ENCODE measurements at regions of chr12 and their contacts with region 1.

Region 1: DNA sequence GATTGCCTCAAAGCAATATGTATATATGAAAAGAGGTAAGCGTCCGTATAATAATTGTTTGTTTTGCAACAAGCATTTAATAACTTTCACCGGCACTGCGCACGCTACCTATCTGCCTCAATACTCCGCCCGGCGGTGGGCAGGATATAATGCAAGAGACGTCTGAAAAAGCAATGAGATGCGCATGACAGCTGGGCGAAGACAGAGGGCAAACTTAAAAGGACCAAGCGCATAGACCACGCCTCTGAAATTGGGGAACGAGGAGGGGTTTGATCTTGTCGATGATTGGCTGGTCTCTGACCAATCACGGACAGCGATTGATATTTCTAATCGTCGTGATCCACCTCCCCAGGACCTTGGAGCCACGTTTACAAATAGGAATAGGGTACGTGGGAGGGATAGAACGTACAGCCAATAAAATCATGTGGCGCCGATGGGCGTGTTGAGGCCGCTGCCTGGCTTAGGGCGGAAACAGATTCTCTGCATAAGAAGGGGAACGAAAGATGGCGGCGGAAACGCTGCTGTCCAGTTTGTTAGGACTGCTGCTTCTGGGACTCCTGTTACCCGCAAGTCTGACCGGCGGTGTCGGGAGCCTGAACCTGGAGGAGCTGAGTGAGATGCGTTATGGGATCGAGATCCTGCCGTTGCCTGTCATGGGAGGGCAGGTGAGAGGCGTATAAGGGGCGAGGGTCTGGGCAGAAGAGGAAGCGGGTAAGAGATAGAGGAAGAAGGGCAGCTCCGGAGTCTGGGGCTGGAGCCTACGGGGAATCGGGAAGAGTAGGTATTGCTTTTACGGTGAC is at the start of gene OS9:
- DNase-seq: peak; percentile 98 to 99
- H3K4me3 ChIP-seq: peak within 1 kb of the TSS; percentile 81 to 86
- H3K27ac ChIP-seq: peak within 1 kb of the TSS; percentile 81
- H3K4me1 ChIP-seq: peaks cover 0 to 13% (median 11%) of the 10 kb centered on the region in 4 donors
- H3K27me3 ChIP-seq: no peaks in the 10 kb centered on the region
- CTCF ChIP-seq: peak; percentile 69 to 83

Region 2: GRCh38 chr12:57632694-57633477 is 61.0 kb before region 1 on chr12 and contains the start of gene B4GALNT1:
- intact Hi-C with region 1: loop called (anchors 5 kb)
- DNase-seq: no peak
- H3K4me3 ChIP-seq: peak within 1 kb of the TSS; percentile 52 to 73
- H3K27ac ChIP-seq: peak within 1 kb of the TSS; percentile 31 to 34
- H3K4me1 ChIP-seq: peaks cover 0 to 22% (median 17%) of the 10 kb centered on the region in 4 donors
- H3K27me3 ChIP-seq: peaks cover 0 to 18% of the 10 kb centered on the region in 2 donors
- CTCF ChIP-seq: peak; percentile 89 to 92

Region 3: GRCh38 chr12:57744777-57745484 is 51.1 kb after region 1 on chr12 and contains the start of gene TSPAN31:
- intact Hi-C with region 1: no loop called
- DNase-seq: peak; percentile 99
- H3K4me3 ChIP-seq: peak within 1 kb of the TSS; percentile 80 to 97
- H3K27ac ChIP-seq: peak within 1 kb of the TSS; percentile 98 to 99
- H3K4me1 ChIP-seq: peaks cover 0 to 16% (median 11%) of the 10 kb centered on the region in 4 donors
- H3K27me3 ChIP-seq: peaks cover 0 to 23% of the 10 kb centered on the region in 2 donors
- CTCF ChIP-seq: peak in 1 of 2 experiments; percentile 16